ENCODE measurements at regions of chr19 and their contacts with region 1.

Region 1: DNA sequence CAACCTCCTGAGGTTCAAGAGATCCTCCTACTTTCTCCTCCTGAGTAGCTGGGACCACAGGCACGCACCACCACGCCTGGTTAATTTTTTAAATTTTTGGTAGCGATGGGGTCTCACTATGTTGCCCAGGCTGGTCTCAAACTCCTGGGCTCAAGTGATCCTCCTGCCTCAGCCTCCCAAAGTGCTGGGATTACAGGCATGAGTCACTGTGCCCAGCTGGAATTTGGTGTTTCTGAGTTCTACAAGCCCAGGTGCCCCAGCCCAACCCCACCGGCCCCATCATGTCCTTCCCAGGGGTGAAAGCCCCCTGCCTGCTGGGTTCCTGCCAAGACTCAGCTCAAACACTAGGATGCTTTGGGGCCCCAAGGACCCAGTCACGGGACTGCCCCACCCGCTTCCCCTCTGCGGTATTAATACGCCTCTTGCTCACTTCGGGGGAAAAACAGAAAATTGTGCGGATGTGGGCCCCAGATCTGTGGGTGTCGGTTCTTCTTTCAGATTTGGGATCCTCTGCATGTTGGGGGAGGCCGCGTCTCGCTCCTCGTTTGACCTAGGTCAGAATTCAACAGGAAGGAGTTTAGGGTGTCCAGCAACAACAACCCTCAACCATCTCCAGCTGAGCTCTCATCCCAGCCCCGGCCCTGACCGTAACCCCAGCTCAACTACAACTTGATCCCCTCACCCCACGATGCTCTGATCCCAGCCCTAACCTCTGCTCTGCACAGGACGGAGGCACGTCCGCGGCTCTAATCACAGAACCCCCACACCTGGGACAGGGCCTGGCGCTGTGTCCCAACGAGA is 3.7 kb upstream of the FCER2 start:
- H3K4me3 Mint-ChIP-seq: peak overlapping the region; percentile 65
- H3K27ac Mint-ChIP-seq: peak overlapping the region; percentile 96
- H3K4me1 Mint-ChIP-seq: peaks cover 97% of the 10 kb centered on the region
- H3K27me3 Mint-ChIP-seq: no peaks in the 10 kb centered on the region

Region 2: DNA sequence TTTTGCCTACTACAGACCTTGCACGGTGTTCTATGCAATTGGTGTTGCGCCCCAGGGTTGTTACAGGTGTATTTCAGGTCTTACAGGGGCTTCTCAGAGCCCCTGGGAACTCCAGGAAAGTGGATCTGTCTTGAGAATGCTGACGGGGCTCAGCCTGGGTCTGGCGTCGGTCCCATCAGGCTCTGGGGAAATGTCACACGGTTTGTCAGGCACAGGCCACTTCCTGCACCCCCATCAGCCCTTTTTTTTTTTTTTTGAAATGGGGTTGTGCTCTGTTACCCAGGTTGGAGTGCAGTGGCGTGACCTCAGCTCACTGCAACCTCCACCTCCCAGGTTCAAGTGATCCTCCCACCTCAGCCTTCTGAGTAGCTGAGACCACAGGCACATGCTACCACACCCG is 13.1 kb after region 1 on chr19:
- intact Hi-C with region 1: loop called (anchors 1 kb)
- H3K4me3 Mint-ChIP-seq: no peak overlapping the region
- H3K27ac Mint-ChIP-seq: peak overlapping the region; percentile 45
- H3K4me1 Mint-ChIP-seq: peaks cover 55% of the 10 kb centered on the region
- H3K27me3 Mint-ChIP-seq: no peaks in the 10 kb centered on the region

Region 3: DNA sequence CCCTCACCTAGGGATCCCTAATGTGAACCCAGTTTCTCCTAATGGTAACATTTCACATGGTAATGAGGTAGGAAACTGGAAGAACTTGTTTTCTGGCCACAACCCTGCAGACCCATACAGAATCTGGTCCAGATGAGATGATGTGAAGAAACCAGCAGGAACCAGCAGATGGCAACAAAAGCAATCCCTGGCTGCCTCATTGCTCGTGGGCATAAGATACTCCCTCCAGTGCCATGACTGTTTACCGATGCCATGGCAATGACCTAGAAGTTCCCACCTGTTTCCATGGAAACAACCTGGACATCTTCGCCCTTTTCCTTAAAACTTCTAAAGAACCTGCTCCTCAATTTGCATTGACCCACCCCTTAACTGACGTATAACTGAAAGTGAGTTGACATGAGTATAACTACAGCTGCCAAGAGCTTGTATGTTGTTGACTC is 43.2 kb after region 1 on chr19:
- intact Hi-C with region 1: no loop called
- H3K4me3 Mint-ChIP-seq: no peak overlapping the region
- H3K27ac Mint-ChIP-seq: peak overlapping the region; percentile 25
- H3K4me1 Mint-ChIP-seq: peaks cover 66% of the 10 kb centered on the region
- H3K27me3 Mint-ChIP-seq: peaks cover 5% of the 10 kb centered on the region

Measured in dendritic cell treated with granulocyte-macrophage colony-stimulating factor and Interleukin-4, amounts not matched to agents 40 ng/mL and 50 ng/mL, for 4 days (primary cell).